ENCODE measurements at regions of chr6 and their contacts with region 1.

Region 1: GRCh38 chr6:92271101-92271500 is 1148.3 kb downstream of the EPHA7 start:
- DNase-seq: no peak
- ATAC-seq: no peak
- H3K4me3 ChIP-seq: no peak overlapping the region
- H3K27ac ChIP-seq: no peak overlapping the region
- H3K4me1 ChIP-seq: no peaks in the 10 kb centered on the region
- H3K27me3 ChIP-seq: no peaks in the 10 kb centered on the region
- CTCF ChIP-seq: no peak
- EP300 ChIP-seq: no peak
- POLR2A ChIP-seq: no peak
- RAD21 ChIP-seq: no peak

Region 2: GRCh38 chr6:92216717-92217116 is 54.4 kb before region 1 on chr6:
- CTCF ChIA-PET with region 1: no interaction called
- POLR2A ChIA-PET with region 1: no interaction called
- in situ Hi-C with region 1: no loop called
- intact Hi-C with region 1: no loop called
- DNase-seq: no peak
- ATAC-seq: no peak
- H3K4me3 ChIP-seq: no peak overlapping the region
- H3K27ac ChIP-seq: no peak overlapping the region
- H3K4me1 ChIP-seq: no peaks in the 10 kb centered on the region
- H3K27me3 ChIP-seq: no peaks in the 10 kb centered on the region
- CTCF ChIP-seq: no peak
- EP300 ChIP-seq: no peak
- POLR2A ChIP-seq: no peak
- RAD21 ChIP-seq: no peak

Region 3: DNA sequence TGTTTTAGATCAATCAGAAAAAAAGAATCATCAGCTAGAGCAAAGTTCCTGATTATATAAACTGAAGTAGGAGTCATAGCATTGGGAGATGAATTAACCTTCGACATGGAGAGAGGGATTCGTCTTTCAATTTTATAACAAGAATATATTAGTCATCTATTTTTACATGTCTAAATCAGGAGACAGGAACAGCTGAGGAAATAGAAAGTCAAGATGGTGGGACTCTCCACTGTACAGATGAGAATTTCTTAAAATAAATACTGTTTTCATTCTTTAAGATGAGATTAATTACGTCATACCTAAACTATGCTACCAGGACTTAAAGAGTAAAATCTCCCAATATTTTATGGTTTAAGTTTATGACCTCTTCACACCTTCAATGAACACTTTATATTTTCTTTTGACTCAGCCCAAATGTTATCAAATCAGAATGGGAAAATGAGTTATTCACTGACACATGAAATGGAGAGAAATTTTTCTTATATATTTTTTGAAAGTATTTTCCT is 10.5 kb after region 1 on chr6:
- CTCF ChIA-PET with region 1: no interaction called
- POLR2A ChIA-PET with region 1: no interaction called
- in situ Hi-C with region 1: no loop called
- intact Hi-C with region 1: loop called (anchors 1 kb)
- DNase-seq: no peak
- ATAC-seq: no peak
- H3K4me3 ChIP-seq: no peak overlapping the region
- H3K27ac ChIP-seq: no peak overlapping the region
- H3K4me1 ChIP-seq: no peaks in the 10 kb centered on the region
- H3K27me3 ChIP-seq: no peaks in the 10 kb centered on the region
- CTCF ChIP-seq: no peak
- EP300 ChIP-seq: no peak
- POLR2A ChIP-seq: no peak
- RAD21 ChIP-seq: no peak

Measured in HepG2 (cell line).